CD4-positive, alpha-beta T cell (primary cell): ENCODE measurements at regions of chr6 and their contacts with region 1.

Region 1: GRCh38 chr6:27672113-27672799 is 199.4 kb upstream of the ZNF184 start:
- DNase-seq: peak in 1 of 14 experiments; percentile 50
- ATAC-seq: peak; percentile 41
- H3K4me3 ChIP-seq: no peak overlapping the region
- H3K4me3 Mint-ChIP-seq: peak overlapping the region; percentile 5
- H3K27ac ChIP-seq: no peak overlapping the region
- H3K27ac Mint-ChIP-seq: peak overlapping the region; percentile 3
- H3K4me1 ChIP-seq: peaks cover 28% of the 10 kb centered on the region
- H3K4me1 Mint-ChIP-seq: peaks cover 40% of the 10 kb centered on the region
- H3K27me3 ChIP-seq: peaks cover 66 to 94% of the 10 kb centered on the region in 2 experiments
- H3K27me3 Mint-ChIP-seq: peaks cover 98% of the 10 kb centered on the region
- CTCF ChIP-seq: no peak

Region 2: DNA sequence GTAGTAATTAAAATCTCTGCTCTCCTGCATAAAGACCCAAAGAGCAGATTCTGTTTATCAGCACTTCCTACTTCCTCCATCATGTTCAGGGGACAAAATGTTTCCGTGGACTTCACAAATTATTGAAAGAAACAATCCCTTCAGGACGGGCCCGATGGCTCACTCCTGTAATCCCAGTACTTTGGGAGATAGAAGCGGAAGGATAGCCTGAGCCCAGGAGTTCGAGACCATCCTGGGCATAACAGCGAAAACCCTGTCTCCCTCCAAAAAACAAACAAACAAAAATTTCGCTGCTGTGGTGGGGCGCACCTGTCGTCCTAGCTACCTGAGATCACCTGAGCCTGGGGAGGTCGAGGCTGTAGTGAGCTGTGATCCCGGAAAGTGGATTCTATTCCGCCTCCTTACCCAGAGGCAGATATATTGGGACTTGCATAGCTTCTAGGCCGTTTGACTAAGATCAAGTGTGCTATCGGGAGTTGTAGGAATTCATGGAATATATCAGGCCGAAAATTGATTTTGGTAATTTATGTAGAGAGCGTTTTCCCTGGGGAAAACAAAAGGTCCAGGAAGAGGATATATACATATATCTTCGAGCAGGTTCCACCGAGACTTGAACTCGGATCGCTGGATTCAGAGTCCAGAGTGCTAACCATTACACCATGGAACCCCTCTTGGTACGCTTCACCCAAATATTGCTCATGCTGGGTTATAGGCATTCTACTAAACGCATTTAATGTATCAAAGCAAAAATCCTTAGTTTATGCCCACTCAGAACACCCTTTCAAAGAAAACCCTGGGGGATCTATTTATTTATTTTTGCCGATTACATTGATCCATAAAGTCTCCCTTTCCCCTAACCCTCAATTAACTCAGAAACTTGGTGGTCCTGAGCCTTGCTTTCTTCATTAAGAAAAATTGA is 124.8 kb before region 1 on chr6:
- CTCF ChIA-PET with region 1: no interaction called
- POLR2A ChIA-PET with region 1: no interaction called
- intact Hi-C with region 1: loop called in 1 of 2 experiments (anchors 5 kb)
- DNase-seq: no peak
- ATAC-seq: no peak
- H3K4me3 ChIP-seq: no peak overlapping the region
- H3K4me3 Mint-ChIP-seq: no peak overlapping the region
- H3K27ac ChIP-seq: no peak overlapping the region
- H3K27ac Mint-ChIP-seq: no peak overlapping the region
- H3K4me1 ChIP-seq: peaks cover 10% of the 10 kb centered on the region
- H3K4me1 Mint-ChIP-seq: peaks cover 12% of the 10 kb centered on the region
- H3K27me3 ChIP-seq: peaks cover 75 to 95% of the 10 kb centered on the region in 2 experiments
- H3K27me3 Mint-ChIP-seq: peaks cover 97% of the 10 kb centered on the region
- CTCF ChIP-seq: no peak

Region 3: GRCh38 chr6:27592481-27593199 is 79.6 kb before region 1 on chr6:
- CTCF ChIA-PET with region 1: no interaction called
- POLR2A ChIA-PET with region 1: no interaction called
- intact Hi-C with region 1: loop called in 1 of 2 experiments (anchors 5 kb)
- DNase-seq: peak in 4 of 14 experiments; percentile 8 to 37 (median 32)
- ATAC-seq: peak; percentile 34
- H3K4me3 ChIP-seq: no peak overlapping the region
- H3K4me3 Mint-ChIP-seq: no peak overlapping the region
- H3K27ac ChIP-seq: no peak overlapping the region
- H3K27ac Mint-ChIP-seq: no peak overlapping the region
- H3K4me1 ChIP-seq: peaks cover 11% of the 10 kb centered on the region
- H3K4me1 Mint-ChIP-seq: no peaks in the 10 kb centered on the region
- H3K27me3 ChIP-seq: peaks cover 60 to 83% of the 10 kb centered on the region in 2 experiments
- H3K27me3 Mint-ChIP-seq: peaks cover 51% of the 10 kb centered on the region
- CTCF ChIP-seq: no peak

Region 4: DNA sequence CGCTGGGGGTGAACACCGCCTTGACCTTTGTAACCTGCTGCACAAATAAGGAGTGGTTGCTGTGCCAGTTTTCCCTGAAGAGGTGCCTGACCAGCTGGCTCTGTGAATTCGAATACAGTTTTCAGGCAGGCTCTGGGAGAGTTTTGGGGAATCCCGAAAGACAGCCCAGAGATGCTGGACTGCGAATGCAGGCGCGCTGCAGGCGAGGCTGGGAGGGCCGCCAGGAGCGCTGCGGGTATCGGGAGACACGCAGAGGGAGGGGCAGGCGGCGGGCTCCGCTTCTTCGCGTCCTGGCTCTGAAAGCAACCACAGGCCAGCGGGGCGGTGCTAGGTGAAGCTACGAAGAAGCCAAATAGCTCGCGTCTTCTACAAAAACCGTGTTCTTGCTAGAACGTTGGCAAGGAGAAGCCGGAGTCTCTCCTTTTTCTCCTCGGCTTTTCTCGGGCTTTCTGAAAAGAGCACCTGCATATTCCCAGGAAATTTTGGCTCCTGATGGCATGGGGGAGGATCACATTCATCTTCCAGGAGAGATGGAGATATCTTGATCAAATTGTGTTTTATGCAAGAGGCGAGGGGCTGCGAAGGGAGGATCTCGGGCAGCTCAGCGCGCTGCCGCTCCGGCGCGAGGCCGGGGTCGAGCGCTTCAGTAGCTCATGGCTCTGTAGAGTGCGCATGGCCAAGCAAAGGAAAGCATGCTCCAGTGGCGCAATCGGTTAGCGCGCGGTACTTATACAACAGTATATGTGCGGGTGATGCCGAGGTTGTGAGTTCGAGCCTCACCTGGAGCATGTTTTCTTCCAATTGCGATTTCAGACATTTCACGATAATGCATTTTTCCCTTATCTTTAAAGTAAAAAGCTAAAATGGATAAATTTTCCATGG is 41.3 kb before region 1 on chr6:
- CTCF ChIA-PET with region 1: no interaction called
- POLR2A ChIA-PET with region 1: no interaction called
- intact Hi-C with region 1: no loop called
- DNase-seq: peak in 2 of 14 experiments; percentile 8 to 16
- ATAC-seq: no peak
- H3K4me3 ChIP-seq: no peak overlapping the region
- H3K4me3 Mint-ChIP-seq: peak overlapping the region; percentile 75
- H3K27ac ChIP-seq: no peak overlapping the region
- H3K27ac Mint-ChIP-seq: peak overlapping the region; percentile 24
- H3K4me1 ChIP-seq: peaks cover 10% of the 10 kb centered on the region
- H3K4me1 Mint-ChIP-seq: peaks cover 14% of the 10 kb centered on the region
- H3K27me3 ChIP-seq: peaks cover 52 to 71% of the 10 kb centered on the region in 2 experiments
- H3K27me3 Mint-ChIP-seq: peaks cover 81% of the 10 kb centered on the region
- CTCF ChIP-seq: no peak

Region 5: DNA sequence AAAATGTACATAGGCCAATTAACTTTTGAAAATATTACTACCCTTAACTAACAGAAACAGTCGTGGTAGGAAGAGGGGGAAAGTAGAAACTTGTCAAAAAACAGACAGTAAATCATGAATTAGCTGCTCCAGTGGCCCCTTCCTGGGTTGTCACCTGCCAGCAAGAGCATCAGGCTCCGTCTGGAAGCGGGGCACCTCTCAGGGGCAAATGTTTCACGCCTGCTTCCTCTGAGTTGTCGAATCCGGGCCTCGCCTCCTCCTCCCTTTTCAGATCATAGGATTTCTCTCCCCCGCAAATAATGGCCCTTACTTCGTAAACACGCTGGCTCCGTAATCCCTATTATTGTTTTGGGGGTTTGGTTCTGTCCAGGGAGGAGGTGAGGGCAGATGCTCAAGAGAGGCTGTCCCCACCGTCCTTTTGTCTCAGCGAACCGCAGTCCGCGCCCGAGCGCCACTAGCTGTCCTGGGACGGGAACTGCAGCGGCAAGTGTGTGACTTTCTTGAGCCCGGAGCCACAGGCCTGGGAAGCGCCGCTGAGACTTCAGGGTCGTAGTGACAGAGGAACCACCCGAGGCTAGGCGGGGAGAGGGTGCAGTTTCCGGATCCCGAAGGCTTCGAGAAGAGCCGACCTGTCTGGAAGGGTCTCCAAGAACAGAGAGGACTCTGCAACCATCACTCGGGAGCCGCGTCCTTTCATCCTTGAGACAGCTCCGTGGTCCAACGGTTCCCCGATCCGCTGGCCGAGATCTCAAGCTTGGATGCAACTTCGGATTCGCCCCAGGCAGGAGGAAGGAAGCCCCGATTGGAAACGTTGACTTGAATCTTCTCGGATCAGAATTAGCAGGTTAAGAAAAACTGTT is 15.1 kb after region 1 on chr6:
- CTCF ChIA-PET with region 1: interaction called, 9 read pairs
- POLR2A ChIA-PET with region 1: interaction called, 5 read pairs
- intact Hi-C with region 1: loop called in 1 of 2 experiments (anchors 2 kb)
- DNase-seq: peak; percentile 53 to 87 (median 68)
- ATAC-seq: peak; percentile 74
- H3K4me3 ChIP-seq: peak overlapping the region; percentile 88
- H3K4me3 Mint-ChIP-seq: peak overlapping the region; percentile 95
- H3K27ac ChIP-seq: peak overlapping the region in 1 of 2 donors; percentile 37
- H3K27ac Mint-ChIP-seq: peak overlapping the region; percentile 97
- H3K4me1 ChIP-seq: peaks cover 14% of the 10 kb centered on the region
- H3K4me1 Mint-ChIP-seq: peaks cover 38% of the 10 kb centered on the region
- H3K27me3 ChIP-seq: peaks cover 5 to 9% of the 10 kb centered on the region in 2 experiments
- H3K27me3 Mint-ChIP-seq: peaks cover 40% of the 10 kb centered on the region
- CTCF ChIP-seq: peak; percentile 66

Region 6: DNA sequence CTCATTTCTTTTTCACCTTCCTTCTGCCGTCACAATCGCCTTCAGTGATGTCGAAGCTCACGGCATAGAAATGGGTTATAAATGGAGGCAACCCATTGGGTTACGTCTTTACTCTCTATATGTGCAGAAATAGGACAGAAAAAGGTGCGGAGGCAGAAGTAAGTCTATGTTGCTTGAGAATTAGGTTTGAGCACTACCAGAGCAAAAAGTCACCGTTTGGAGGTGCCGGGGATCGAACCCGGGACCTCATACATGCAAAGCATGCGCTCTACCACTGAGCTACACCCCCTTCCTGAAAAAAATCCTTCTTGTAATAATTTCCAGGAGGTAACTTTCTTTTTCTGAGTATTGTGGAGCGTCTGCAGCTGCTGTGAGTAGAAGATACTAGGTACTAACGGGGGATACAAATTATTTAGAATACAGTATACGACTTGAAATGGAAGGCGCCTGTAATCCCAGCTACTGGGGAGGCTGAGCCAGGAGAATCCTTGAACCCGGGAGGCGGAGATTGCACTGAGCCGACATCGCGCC is 1117.4 kb after region 1 on chr6:
- CTCF ChIA-PET with region 1: interaction called, 4 read pairs
- POLR2A ChIA-PET with region 1: no interaction called
- intact Hi-C with region 1: loop called in 1 of 2 experiments (anchors 5 kb)
- DNase-seq: no peak
- ATAC-seq: no peak
- H3K4me3 ChIP-seq: no peak overlapping the region
- H3K4me3 Mint-ChIP-seq: no peak overlapping the region
- H3K27ac ChIP-seq: no peak overlapping the region
- H3K27ac Mint-ChIP-seq: no peak overlapping the region
- H3K4me1 ChIP-seq: peaks cover 3% of the 10 kb centered on the region
- H3K4me1 Mint-ChIP-seq: peaks cover 13% of the 10 kb centered on the region
- H3K27me3 ChIP-seq: peaks cover 91 to 98% of the 10 kb centered on the region in 2 experiments
- H3K27me3 Mint-ChIP-seq: peaks cover 99% of the 10 kb centered on the region
- CTCF ChIP-seq: no peak